Dorsolateral prefrontal cortex (tissue), 120 donors: ENCODE measurements at regions of chr2 and their contacts with region 1.

Region 1: GRCh38 chr2:33033606-33034081 is 86.9 kb downstream of the LTBP1 start:
- DNase-seq: peak in 1 of 10 donors; percentile 22
- H3K4me3 ChIP-seq: peak overlapping the region in 57 of 59 donors; percentile 1 to 68 (median 47)
- H3K27ac ChIP-seq: peak overlapping the region in 16 of 59 donors; percentile 3 to 79 (median 48)
- H3K27me3 ChIP-seq: no peaks in the 10 kb centered on the region
- CTCF ChIP-seq: peak; percentile 40 to 92 (median 81)

Region 2: DNA sequence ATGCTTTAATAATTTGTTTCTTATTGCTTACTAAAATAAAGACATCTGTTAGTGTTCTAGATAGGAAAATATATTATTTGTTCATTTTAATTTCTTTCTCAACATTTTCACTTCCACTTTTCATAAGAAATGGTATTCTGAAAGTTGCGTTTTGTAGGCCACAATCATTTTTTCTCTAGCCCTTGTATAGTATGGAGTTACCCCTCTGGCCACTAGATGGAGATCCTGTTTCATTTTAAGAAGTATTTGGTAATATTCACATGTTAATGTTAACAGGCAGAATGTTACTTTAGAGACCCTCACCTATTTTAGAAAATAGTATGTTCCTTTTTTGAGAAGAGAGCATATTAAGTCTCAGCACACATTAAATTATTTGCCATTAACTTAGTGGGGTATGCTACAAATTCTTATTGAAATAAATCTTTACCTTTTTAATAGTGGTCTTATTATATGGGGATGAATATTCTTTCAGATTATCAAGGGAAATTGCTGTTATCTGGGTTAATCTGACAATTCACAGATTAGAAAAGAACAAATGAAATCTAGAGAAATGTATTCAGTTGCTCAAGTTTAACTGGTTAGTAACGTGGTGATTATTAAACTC is 479.7 kb before region 1 on chr2:
- intact Hi-C with region 1: loop called (anchors 5 to 10 kb)
- DNase-seq: no peak
- H3K4me3 ChIP-seq: no peak overlapping the region
- H3K27ac ChIP-seq: peak overlapping the region in 13 of 59 donors; percentile 5 to 61 (median 33)
- H3K27me3 ChIP-seq: no peaks in the 10 kb centered on the region
- CTCF ChIP-seq: peak; percentile 66 to 96 (median 82)

Region 3: GRCh38 chr2:32752205-32752604 is 281.4 kb before region 1 on chr2:
- intact Hi-C with region 1: no loop called
- DNase-seq: no peak
- H3K4me3 ChIP-seq: no peak overlapping the region
- H3K27ac ChIP-seq: no peak overlapping the region
- H3K27me3 ChIP-seq: no peaks in the 10 kb centered on the region
- CTCF ChIP-seq: no peak

Region 4: DNA sequence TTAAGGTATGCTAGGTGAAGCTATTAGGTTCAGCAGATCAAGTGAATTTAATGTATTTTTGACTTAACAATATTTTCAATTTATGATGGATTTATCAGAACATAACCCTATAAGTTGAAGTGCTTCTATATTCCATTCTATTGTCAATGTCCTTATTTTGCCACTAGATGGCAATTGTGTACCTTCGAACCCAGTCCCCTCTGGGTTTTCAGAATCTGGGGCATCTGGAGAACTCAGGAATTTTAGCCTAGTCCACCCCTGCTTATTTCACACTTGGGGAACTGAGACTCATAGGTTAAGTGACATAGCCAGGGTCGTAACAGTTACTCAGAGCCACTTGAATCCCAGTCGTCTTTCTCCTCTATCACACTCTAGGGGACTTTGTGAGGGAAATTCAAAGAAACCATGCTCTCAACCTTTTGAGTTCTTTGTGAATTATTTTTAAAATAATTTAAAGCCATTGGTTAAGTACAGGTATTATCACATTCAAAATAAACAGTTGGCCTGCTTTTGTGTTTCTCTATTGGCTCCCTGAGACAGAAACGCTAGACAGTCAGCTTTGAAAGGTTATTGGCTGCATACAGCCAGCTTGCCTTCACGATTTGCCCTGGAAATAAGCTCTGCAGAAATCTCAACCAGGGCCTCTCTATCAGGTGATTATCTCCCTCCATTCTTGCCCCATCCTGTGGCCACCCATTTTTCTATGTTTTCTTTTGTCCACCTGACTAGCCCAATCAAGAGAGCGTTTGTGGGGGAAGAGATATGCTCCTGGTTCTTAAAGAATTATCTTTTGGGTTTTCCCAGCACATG is 260.8 kb before region 1 on chr2:
- intact Hi-C with region 1: loop called (anchors 2 kb)
- DNase-seq: peak in 1 of 10 donors; percentile 16
- H3K4me3 ChIP-seq: no peak overlapping the region
- H3K27ac ChIP-seq: peak overlapping the region in 2 of 59 donors; percentile 24 to 32
- H3K27me3 ChIP-seq: no peaks in the 10 kb centered on the region
- CTCF ChIP-seq: peak; percentile 65 to 95 (median 85)

Region 5: DNA sequence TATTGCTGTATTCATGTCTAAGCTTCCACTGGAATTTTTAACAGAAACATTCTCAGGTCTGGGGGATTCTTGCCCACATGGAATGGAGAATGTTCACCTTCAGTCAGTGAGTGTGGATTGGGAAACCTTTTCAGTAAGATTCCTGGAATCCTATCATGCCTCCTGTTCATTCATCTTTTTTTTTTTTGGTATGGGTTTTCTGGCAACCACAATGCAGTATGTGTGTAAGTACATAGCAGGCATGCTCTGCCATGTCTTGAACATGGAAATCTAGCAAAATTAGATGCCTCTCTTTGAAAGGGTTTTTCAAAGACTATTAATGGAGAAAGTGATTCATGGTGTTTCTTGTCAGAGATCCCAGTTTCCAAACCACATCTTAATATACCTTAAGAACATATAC is 89.6 kb after region 1 on chr2:
- intact Hi-C with region 1: no loop called
- DNase-seq: no peak
- H3K4me3 ChIP-seq: no peak overlapping the region
- H3K27ac ChIP-seq: no peak overlapping the region
- H3K27me3 ChIP-seq: no peaks in the 10 kb centered on the region
- CTCF ChIP-seq: no peak

Region 6: GRCh38 chr2:33134086-33134771 is 100.6 kb after region 1 on chr2:
- intact Hi-C with region 1: no loop called
- DNase-seq: peak in 3 of 10 donors; percentile 28 to 43 (median 41)
- H3K4me3 ChIP-seq: peak overlapping the region; percentile 20 to 70 (median 51)
- H3K27ac ChIP-seq: peak overlapping the region in 38 of 59 donors; percentile 1 to 78 (median 32)
- H3K27me3 ChIP-seq: no peaks in the 10 kb centered on the region
- CTCF ChIP-seq: peak in 4 of 56 donors; percentile 12 to 20 (median 16)

Region 7: DNA sequence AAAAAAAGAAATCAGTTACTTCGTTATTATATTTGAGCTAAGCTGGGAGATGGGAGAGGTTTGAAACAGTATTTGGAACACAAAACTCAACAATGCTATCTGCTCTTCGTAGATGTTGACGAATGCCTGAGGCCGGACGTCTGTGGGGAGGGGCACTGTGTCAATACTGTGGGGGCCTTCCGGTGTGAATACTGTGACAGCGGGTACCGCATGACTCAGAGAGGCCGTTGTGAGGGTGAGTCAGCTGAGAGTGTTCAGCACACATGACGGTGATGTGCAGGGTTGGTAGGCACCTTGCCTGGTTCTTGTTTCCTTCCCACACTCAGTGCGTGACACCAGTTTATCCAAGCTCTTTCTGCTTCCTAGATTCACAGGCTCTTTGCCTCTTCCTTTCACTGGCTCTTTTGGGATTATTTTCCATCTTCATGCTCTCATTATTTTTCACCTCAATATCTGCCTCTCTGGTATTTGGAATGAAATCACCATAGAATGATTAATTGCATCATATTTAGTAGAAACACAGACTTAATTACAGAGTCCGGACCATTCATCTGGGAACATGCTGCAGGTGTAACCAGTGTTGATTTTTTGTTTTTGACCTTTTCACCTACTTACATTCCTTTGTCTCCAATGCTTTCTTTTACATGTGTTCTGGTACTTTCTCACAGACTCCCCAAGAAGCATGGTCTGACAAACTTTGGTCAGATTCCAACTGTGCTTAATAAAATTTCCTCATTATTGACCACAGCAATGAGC is 242.2 kb after region 1 on chr2:
- intact Hi-C with region 1: loop called in 1 of 2 experiments (anchors 2 kb)
- DNase-seq: peak in 4 of 10 donors; percentile 32 to 68 (median 43)
- H3K4me3 ChIP-seq: no peak overlapping the region
- H3K27ac ChIP-seq: peak overlapping the region in 1 of 59 donors; percentile 15
- H3K27me3 ChIP-seq: no peaks in the 10 kb centered on the region
- CTCF ChIP-seq: no peak

Region 8: GRCh38 chr2:33378556-33379210 is 345.0 kb after region 1 on chr2:
- intact Hi-C with region 1: loop called (anchors 5 kb)
- DNase-seq: peak in 2 of 10 donors; percentile 40 to 45
- H3K4me3 ChIP-seq: peak overlapping the region in 7 of 59 donors; percentile 5 to 30 (median 17)
- H3K27ac ChIP-seq: peak overlapping the region; percentile 14 to 94 (median 82)
- H3K27me3 ChIP-seq: no peaks in the 10 kb centered on the region
- CTCF ChIP-seq: peak in 1 of 56 donors; percentile 12

Region 9: DNA sequence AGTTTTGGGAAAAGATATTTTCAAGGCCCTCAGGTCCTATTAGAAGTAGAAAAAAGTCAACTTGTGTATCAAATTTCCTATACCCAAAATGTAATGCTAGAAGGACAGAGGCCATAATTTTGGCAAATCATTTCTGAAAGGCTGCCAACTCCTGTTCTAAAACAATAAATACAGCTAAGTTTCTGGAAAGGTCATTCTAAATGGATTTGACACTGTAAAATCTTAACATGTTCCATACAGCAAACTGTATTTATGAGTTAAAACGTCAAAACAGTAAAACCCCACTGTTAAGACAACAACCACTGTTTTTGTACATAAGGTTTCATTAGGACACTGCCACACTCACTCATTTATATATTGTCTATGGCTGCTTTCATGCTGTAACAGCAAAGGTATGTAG is 555.8 kb after region 1 on chr2:
- intact Hi-C with region 1: loop called in 1 of 2 experiments (anchors 5 kb)
- DNase-seq: no peak
- H3K4me3 ChIP-seq: no peak overlapping the region
- H3K27ac ChIP-seq: peak overlapping the region in 26 of 59 donors; percentile 2 to 64 (median 36)
- H3K27me3 ChIP-seq: no peaks in the 10 kb centered on the region
- CTCF ChIP-seq: no peak